ENCODE measurements at regions of chr7 and their contacts with region 1.

Region 1: GRCh38 chr7:11212080-11212711 is 238.5 kb downstream of the PHF14 start:
- DNase-seq: peak; percentile 26
- H3K4me3 Mint-ChIP-seq: no peak overlapping the region
- H3K27ac Mint-ChIP-seq: no peak overlapping the region
- H3K4me1 Mint-ChIP-seq: peaks cover 9% of the 10 kb centered on the region
- H3K27me3 Mint-ChIP-seq: no peaks in the 10 kb centered on the region

Region 2: GRCh38 chr7:10889266-10889898 is 322.8 kb before region 1 on chr7:
- intact Hi-C with region 1: loop called (anchors 1 kb)
- DNase-seq: no peak
- H3K4me3 Mint-ChIP-seq: no peak overlapping the region
- H3K27ac Mint-ChIP-seq: no peak overlapping the region
- H3K4me1 Mint-ChIP-seq: peaks cover 11% of the 10 kb centered on the region
- H3K27me3 Mint-ChIP-seq: no peaks in the 10 kb centered on the region

Region 3: GRCh38 chr7:10973061-10973944 is 238.9 kb before region 1 on chr7 and contains the start of gene PHF14:
- intact Hi-C with region 1: loop called (anchors 1 kb)
- DNase-seq: peak; percentile 94
- H3K4me3 Mint-ChIP-seq: peak within 1 kb of the TSS; percentile 97
- H3K27ac Mint-ChIP-seq: peak within 1 kb of the TSS; percentile 90
- H3K4me1 Mint-ChIP-seq: peaks cover 39% of the 10 kb centered on the region
- H3K27me3 Mint-ChIP-seq: peaks cover 10% of the 10 kb centered on the region
- total RNA-seq, gene PHF14: 42.9 and 43.8 TPM in 2 replicates

Region 4: DNA sequence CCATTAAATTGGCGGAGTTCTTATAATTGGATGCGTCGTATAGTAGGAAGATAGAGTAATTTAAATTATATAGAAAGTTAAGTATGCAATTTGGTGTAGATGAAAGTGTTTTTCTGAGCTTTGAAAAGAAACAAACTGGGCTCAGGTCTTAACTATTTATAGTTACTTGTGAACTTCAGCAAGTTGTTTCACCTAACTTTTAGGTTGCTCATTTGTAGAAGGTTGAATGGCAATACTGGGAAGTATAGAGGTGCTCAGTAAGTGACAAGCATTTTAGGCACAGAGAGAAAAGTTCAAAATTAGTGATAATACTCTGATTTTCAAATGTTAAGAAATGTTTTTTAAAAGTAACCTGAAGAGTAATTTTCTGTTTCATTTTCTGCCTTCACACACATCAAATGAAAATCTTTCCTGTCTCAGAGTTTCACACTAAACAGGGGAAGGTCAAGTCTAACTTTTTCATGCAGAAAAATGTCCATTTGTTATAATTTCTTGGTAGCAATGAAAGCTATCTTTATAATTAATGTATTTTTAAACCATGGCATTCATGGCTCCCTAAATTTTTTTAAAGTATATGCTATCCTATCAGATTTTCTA is 92.0 kb before region 1 on chr7:
- intact Hi-C with region 1: loop called (anchors 5 kb)
- DNase-seq: no peak
- H3K4me3 Mint-ChIP-seq: peak overlapping the region; percentile 40
- H3K27ac Mint-ChIP-seq: peak overlapping the region; percentile 71
- H3K4me1 Mint-ChIP-seq: peaks cover 27% of the 10 kb centered on the region
- H3K27me3 Mint-ChIP-seq: no peaks in the 10 kb centered on the region

Region 5: GRCh38 chr7:11193131-11193811 is 18.9 kb before region 1 on chr7:
- intact Hi-C with region 1: loop called (anchors 1 kb)
- DNase-seq: no peak
- H3K4me3 Mint-ChIP-seq: peak overlapping the region; percentile 66
- H3K27ac Mint-ChIP-seq: peak overlapping the region; percentile 75
- H3K4me1 Mint-ChIP-seq: peaks cover 19% of the 10 kb centered on the region
- H3K27me3 Mint-ChIP-seq: peaks cover 5% of the 10 kb centered on the region

Region 6: DNA sequence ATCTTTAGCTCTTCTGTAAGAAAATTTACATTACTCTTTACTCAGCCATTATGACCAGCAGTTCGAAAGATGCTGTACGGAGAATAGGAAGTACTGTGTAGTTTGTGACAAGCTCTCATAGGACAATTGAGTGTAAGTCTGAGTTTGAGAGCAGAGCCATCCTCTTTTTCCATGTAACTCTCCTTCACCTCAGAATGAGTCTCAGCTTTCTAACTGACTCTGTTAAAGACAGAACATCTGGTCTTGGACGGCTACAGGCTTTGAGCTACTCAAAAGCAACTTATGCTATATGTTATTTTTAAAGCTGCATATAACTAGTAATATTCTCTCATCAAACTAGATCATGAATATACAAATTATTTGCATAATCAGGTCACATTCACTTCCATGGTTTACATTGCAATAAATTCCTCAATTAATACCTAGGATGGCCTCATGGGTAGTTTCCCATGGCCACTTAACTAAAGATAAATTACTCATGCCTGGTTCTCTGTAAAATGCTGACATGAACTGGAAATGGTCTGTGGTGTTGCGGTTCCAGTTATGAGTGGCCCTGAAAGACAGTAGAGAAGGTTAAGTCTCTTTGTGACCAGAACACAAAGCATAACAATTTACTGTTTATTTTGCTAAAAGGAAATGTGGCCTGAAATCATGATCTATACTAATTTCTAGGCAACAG is 120.1 kb after region 1 on chr7:
- intact Hi-C with region 1: no loop called
- DNase-seq: no peak
- H3K4me3 Mint-ChIP-seq: no peak overlapping the region
- H3K27ac Mint-ChIP-seq: no peak overlapping the region
- H3K4me1 Mint-ChIP-seq: peaks cover 4% of the 10 kb centered on the region
- H3K27me3 Mint-ChIP-seq: no peaks in the 10 kb centered on the region

Region 7: GRCh38 chr7:11343818-11344413 is 131.7 kb after region 1 on chr7:
- intact Hi-C with region 1: no loop called
- DNase-seq: no peak
- H3K4me3 Mint-ChIP-seq: no peak overlapping the region
- H3K27ac Mint-ChIP-seq: no peak overlapping the region
- H3K4me1 Mint-ChIP-seq: no peaks in the 10 kb centered on the region
- H3K27me3 Mint-ChIP-seq: peaks cover 2% of the 10 kb centered on the region

Measured in activated T-helper 1 cell treated with anti-CD3 and anti-CD28 coated beads, Interleukin-12 subunit alpha, Interleukin-12 subunit beta, Interleukin-2, Interleukin-4 antibody, amounts not matched to agents 30 ng/mL and 10 ng/mL and 1 ng/mL, durations not matched to agents 14 hours and 24 hours and 36 hours (primary cell).